ENCODE measurements at regions of chr7 and their contacts with region 1.

Region 1: DNA sequence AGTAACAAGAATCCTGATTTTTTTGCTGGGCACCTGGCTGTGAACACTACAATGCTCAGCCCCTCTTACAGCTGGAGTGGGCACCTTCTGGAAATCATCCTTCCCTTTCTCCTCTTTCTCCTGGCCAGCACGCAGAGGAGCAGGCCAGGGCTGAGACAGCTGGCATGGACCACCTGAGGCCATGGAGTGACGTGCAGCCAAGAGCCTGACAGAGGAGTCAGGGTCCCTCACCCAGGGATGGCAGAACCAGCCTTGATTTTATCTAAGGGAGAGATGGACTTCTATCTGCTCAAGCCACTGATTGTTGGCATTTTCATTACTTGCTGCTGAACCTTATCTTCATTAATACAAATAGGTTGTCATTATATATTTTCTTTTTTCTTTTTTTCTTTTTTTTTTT is 62.3 kb upstream of the KMT2C start:
- DNase-seq: no peak
- H3K4me3 Mint-ChIP-seq: no peak overlapping the region
- H3K27ac Mint-ChIP-seq: no peak overlapping the region
- H3K4me1 Mint-ChIP-seq: no peaks in the 10 kb centered on the region
- H3K27me3 Mint-ChIP-seq: no peaks in the 10 kb centered on the region

Region 2: DNA sequence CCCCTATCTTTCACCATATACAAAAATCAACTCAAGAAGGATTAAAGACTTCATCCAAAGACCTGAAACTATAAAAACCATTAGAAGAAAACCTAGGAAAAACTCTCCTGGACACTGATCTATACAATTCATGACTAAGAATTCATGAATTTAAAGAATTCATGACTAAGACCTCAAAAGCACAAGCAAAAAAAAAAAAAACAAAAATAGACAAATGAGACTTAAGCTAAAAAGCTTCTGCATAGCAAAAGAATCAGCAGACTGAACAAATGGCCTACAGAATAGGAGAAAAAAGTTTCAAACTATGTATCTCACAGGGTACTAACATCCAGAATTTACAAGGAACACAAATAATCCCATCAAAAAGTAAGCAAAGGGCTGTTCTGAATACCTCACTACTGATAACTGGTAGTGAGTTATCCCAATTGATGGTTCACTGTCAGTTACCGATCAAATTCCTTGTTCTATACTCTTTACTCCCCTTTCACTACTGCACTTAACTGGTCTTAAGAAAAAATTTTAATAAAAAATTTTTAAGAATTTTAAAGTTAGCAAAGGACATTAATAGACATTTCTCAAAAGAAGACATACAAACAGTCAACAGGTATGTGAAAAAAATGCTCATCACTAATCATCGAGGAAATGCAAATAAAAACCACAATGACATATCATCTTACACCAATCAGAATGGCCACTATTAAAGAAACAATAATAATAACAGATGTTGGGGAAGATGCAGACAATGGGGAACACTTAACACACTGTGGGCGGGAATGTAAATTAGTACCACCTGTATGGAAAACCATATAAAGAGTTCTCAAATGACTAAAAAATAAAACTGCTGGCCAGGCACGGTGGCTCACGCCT is 95.5 kb before region 1 on chr7:
- CTCF ChIA-PET with region 1: interaction called, 10 read pairs
- intact Hi-C with region 1: no loop called
- DNase-seq: no peak
- H3K4me3 Mint-ChIP-seq: no peak overlapping the region
- H3K27ac Mint-ChIP-seq: no peak overlapping the region
- H3K4me1 Mint-ChIP-seq: peaks cover 33% of the 10 kb centered on the region
- H3K27me3 Mint-ChIP-seq: no peaks in the 10 kb centered on the region

Measured in activated naive CD4-positive, alpha-beta T cell treated with anti-CD3 and anti-CD28 coated beads for 36 hours (primary cell).